IMR-90 (cell line): ENCODE measurements at regions of chr20 and their contacts with region 1.

Region 1: GRCh38 chr20:48620519-48621254 is 207.1 kb downstream of the PREX1 start:
- DNase-seq: peak; percentile 52
- ATAC-seq: peak; percentile 97
- H3K4me3 ChIP-seq: no peak overlapping the region
- H3K27ac ChIP-seq: no peak overlapping the region
- H3K4me1 ChIP-seq: no peaks in the 10 kb centered on the region
- H3K27me3 ChIP-seq: peaks cover 9% of the 10 kb centered on the region; the same call in 1 of the 2 replicates
- CTCF ChIP-seq: peak; percentile 89
- POLR2A ChIP-seq: peak; percentile 53; the same call in 1 of the 2 replicates
- RAD21 ChIP-seq: peak; percentile 92

Region 2: DNA sequence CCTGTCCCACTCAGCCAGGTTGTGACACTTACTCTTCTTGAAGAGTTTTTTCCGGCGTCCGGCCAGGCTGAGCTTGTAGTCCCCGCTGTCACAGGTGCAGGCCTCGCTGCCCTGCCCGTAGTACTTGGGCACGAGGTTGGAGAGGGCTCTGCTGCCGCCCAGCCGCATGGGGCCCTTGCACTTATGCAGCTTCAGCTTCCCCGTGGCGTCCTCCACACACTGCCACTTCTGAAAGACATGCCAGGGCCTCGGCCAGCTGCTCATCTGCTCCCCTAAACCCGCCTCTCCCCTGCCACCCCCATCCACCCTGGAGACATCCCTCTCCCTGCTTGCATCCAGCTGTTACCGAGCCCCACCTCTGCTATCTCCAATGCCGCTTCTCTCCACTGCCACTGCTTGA is 948.5 kb before region 1 on chr20:
- CTCF ChIA-PET with region 1: interaction called, 4 read pairs
- POLR2A ChIA-PET with region 1: no interaction called
- dilution Hi-C with region 1: no loop called
- in situ Hi-C with region 1: loop called (anchors 5 kb)
- intact Hi-C with region 1: loop called (anchors 1 kb)
- DNase-seq: no peak
- ATAC-seq: no peak
- H3K4me3 ChIP-seq: no peak overlapping the region
- H3K27ac ChIP-seq: no peak overlapping the region
- H3K4me1 ChIP-seq: no peaks in the 10 kb centered on the region
- H3K27me3 ChIP-seq: peaks cover 8% of the 10 kb centered on the region
- CTCF ChIP-seq: no peak
- POLR2A ChIP-seq: no peak
- RAD21 ChIP-seq: no peak

Region 3: GRCh38 chr20:47725248-47725973 is 895.3 kb before region 1 on chr20:
- CTCF ChIA-PET with region 1: interaction called, 4 read pairs
- POLR2A ChIA-PET with region 1: no interaction called
- dilution Hi-C with region 1: no loop called
- in situ Hi-C with region 1: no loop called
- intact Hi-C with region 1: loop called (anchors 1 kb)
- DNase-seq: peak; percentile 73
- ATAC-seq: peak; percentile 83
- H3K4me3 ChIP-seq: no peak overlapping the region
- H3K27ac ChIP-seq: no peak overlapping the region
- H3K4me1 ChIP-seq: peaks cover 2% of the 10 kb centered on the region; the same call in 1 of the 2 replicates
- H3K27me3 ChIP-seq: no peaks in the 10 kb centered on the region; the same call in 1 of the 2 replicates
- CTCF ChIP-seq: peak; percentile 80
- POLR2A ChIP-seq: no peak
- RAD21 ChIP-seq: peak; percentile 68

Region 4: DNA sequence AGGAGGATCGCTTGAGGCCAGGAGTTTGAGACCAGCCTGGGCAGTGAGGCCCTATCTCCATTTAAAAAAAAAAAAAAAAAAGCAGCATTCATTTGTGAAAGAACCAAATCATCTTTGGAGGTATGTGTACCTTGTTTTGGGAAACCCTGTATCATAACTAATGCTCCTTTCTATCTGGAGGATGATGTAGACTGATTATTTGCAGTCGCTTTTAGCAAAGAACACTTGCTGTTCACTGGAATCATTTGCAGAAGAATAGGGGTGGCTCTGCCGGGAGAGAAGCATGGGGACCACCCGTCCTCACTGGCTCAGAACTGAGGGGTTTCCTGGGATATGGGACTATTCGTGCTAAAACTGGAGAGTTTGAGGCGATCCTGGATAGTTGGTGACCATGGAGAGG is 766.5 kb before region 1 on chr20:
- CTCF ChIA-PET with region 1: interaction called, 3 read pairs
- POLR2A ChIA-PET with region 1: no interaction called
- dilution Hi-C with region 1: no loop called
- in situ Hi-C with region 1: no loop called
- intact Hi-C with region 1: loop called (anchors 1 kb)
- DNase-seq: no peak
- ATAC-seq: no peak
- H3K4me3 ChIP-seq: no peak overlapping the region
- H3K27ac ChIP-seq: no peak overlapping the region
- H3K4me1 ChIP-seq: no peaks in the 10 kb centered on the region; the same call in 1 of the 2 replicates
- H3K27me3 ChIP-seq: peaks cover 6% of the 10 kb centered on the region
- CTCF ChIP-seq: no peak
- POLR2A ChIP-seq: no peak
- RAD21 ChIP-seq: no peak

Region 5: DNA sequence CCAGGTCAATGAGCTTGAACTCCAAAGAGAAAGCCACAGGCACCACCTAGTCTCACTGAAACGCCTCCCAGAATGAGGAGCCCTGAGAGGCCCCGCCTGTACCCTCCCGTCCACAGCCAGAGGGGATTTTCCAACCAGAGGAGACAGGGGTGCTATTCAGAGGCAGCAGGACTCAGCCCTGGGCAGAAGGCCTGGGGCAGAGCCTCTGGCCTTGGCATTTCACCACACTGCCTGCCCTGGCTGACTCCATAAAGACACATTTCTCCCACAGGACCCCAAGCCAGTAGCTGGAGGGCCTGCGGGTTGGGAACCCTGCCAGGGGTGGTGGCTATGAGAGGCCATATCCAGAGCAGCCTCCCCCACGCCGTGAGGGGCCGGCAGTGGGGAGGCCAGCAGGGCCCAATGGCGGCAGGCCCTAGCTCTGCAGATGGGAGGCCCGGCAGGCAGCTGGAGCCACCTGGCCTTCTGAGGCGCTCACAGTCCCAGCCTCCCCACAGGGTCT is 47.8 kb after region 1 on chr20:
- CTCF ChIA-PET with region 1: no interaction called
- POLR2A ChIA-PET with region 1: no interaction called
- dilution Hi-C with region 1: no loop called
- in situ Hi-C with region 1: no loop called
- intact Hi-C with region 1: no loop called
- DNase-seq: no peak
- ATAC-seq: peak; percentile 82
- H3K4me3 ChIP-seq: no peak overlapping the region
- H3K27ac ChIP-seq: no peak overlapping the region
- H3K4me1 ChIP-seq: peaks cover 5% of the 10 kb centered on the region; the same call in 1 of the 2 replicates
- H3K27me3 ChIP-seq: peaks cover 2% of the 10 kb centered on the region; the same call in 1 of the 2 replicates
- CTCF ChIP-seq: no peak
- POLR2A ChIP-seq: no peak
- RAD21 ChIP-seq: no peak